GM12878 (cell line): ENCODE measurements at regions of chr5 and their contacts with region 1.

Region 1: DNA sequence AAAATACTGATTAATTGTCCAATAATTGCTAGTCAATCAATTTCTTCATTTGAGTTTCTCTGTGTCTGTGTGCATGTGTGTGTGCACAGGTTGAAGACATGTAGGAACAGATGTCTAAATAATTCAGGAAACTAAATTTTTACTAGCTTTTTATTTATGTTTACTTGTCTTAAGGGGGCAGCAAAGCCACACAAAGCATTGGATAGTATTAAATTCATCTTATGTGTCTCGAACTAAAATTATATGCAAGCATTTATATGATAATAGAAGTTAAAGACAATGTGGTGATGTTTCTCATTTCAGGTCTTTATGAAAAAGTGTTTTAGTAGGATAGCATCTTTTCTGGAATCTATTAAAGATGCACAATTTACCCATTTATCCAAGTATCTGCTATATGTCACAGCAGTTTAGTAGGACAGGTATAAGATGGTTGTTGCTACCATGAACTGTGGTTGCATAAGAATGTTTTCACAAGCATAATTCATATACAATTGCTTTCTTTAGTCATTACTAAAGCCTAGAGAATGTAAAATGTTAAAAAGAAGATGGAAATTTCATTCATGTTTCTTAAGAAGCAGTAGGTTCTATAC is 784.6 kb upstream of the NUDT12 start:
- DNase-seq: no peak
- ATAC-seq: peak; percentile 44; the same call in 1 of the 3 replicates
- H3K4me3 ChIP-seq: no peak overlapping the region
- H3K27ac ChIP-seq: no peak overlapping the region
- H3K4me1 ChIP-seq: no peaks in the 10 kb centered on the region
- H3K27me3 ChIP-seq: no peaks in the 10 kb centered on the region
- CTCF ChIP-seq: peak in 2 of 3 experiments; percentile 8 to 45; a peak in 1 of 6 replicates
- EP300 ChIP-seq: no peak
- POLR2A ChIP-seq: no peak
- RAD21 ChIP-seq: peak; percentile 53

Region 2: DNA sequence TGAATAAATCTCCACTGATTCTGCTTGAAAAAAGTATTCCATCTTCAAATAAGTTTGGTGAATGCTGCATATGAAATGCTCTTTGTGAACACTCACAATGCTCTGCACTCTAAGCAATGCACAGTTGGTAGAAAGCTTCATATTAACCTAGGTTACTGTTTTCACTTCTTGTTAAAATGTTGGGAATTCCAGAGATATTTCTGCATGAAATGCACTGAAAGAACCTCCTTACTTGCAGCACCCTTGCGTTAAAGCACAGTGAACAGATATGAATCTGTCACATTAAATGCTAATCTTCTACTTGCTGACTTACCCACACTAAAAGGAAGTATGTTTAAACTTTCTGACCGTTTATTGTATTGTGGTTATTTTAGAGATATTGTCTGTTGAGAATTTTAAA is 200.6 kb before region 1 on chr5:
- CTCF ChIA-PET with region 1: no interaction called
- POLR2A ChIA-PET with region 1: no interaction called
- RAD21 ChIA-PET with region 1: no interaction called
- SMC1A ChIA-PET with region 1: no interaction called
- in situ Hi-C with region 1: no loop called
- intact Hi-C with region 1: no loop called
- DNase-seq: no peak
- ATAC-seq: no peak
- H3K4me3 ChIP-seq: no peak overlapping the region
- H3K27ac ChIP-seq: no peak overlapping the region
- H3K4me1 ChIP-seq: no peaks in the 10 kb centered on the region
- H3K27me3 ChIP-seq: no peaks in the 10 kb centered on the region
- CTCF ChIP-seq: no peak
- EP300 ChIP-seq: no peak
- POLR2A ChIP-seq: no peak
- RAD21 ChIP-seq: no peak

Region 3: GRCh38 chr5:104412649-104413246 is 65.5 kb after region 1 on chr5:
- CTCF ChIA-PET with region 1: interaction called, 13 read pairs
- POLR2A ChIA-PET with region 1: interaction called, 3 read pairs
- RAD21 ChIA-PET with region 1: interaction called, 19 read pairs
- SMC1A ChIA-PET with region 1: interaction called, 6 read pairs
- in situ Hi-C with region 1: no loop called
- intact Hi-C with region 1: no loop called
- DNase-seq: no peak
- ATAC-seq: peak; percentile 88
- H3K4me3 ChIP-seq: no peak overlapping the region
- H3K27ac ChIP-seq: no peak overlapping the region
- H3K4me1 ChIP-seq: no peaks in the 10 kb centered on the region
- H3K27me3 ChIP-seq: no peaks in the 10 kb centered on the region
- CTCF ChIP-seq: peak in 2 of 3 experiments; percentile 43 to 46; a peak in 3 of 6 replicates
- EP300 ChIP-seq: no peak
- POLR2A ChIP-seq: no peak
- RAD21 ChIP-seq: peak; percentile 41

Region 4: GRCh38 chr5:104513121-104513602 is 165.9 kb after region 1 on chr5:
- CTCF ChIA-PET with region 1: no interaction called
- POLR2A ChIA-PET with region 1: no interaction called
- RAD21 ChIA-PET with region 1: no interaction called
- SMC1A ChIA-PET with region 1: no interaction called
- in situ Hi-C with region 1: no loop called
- intact Hi-C with region 1: no loop called
- DNase-seq: no peak
- ATAC-seq: no peak
- H3K4me3 ChIP-seq: no peak overlapping the region
- H3K27ac ChIP-seq: no peak overlapping the region
- H3K4me1 ChIP-seq: no peaks in the 10 kb centered on the region
- H3K27me3 ChIP-seq: no peaks in the 10 kb centered on the region
- CTCF ChIP-seq: no peak
- EP300 ChIP-seq: no peak
- POLR2A ChIP-seq: no peak
- RAD21 ChIP-seq: no peak

Region 5: DNA sequence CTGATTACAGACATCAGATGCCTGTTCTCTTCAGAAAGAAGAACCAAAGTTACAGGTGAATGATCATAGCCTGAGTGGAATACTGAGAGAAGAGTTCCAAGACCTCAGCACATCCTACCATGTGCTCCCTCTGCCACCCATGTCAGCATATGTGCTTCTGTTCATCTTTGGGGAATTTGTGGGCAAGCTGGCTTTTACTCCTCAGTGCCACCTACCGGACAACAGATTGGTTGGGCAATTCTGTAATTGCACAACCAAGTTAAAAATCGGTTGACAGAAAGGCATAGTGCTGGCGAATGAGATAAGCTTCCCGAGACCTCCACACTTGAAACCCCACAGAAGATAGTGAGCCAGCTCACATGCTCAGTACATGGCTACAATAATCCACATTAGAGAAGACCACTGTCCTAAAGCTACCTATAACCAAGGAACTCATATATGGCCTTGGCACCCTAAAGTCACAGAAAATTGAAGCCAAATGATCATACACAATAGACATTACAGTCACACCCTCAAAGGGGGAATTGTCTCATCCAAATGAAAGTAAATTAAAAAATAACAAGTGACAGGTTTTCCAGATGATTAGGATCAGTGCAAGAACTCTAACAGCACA is 453.3 kb after region 1 on chr5:
- CTCF ChIA-PET with region 1: interaction called, 26 read pairs
- POLR2A ChIA-PET with region 1: no interaction called
- RAD21 ChIA-PET with region 1: interaction called, 5 read pairs
- SMC1A ChIA-PET with region 1: no interaction called
- in situ Hi-C with region 1: no loop called
- intact Hi-C with region 1: loop called (anchors 2 kb)
- DNase-seq: no peak
- ATAC-seq: peak; percentile 81
- H3K4me3 ChIP-seq: no peak overlapping the region
- H3K27ac ChIP-seq: no peak overlapping the region
- H3K4me1 ChIP-seq: no peaks in the 10 kb centered on the region
- H3K27me3 ChIP-seq: no peaks in the 10 kb centered on the region
- CTCF ChIP-seq: peak; percentile 51 to 76 (median 53)
- EP300 ChIP-seq: no peak
- POLR2A ChIP-seq: no peak
- RAD21 ChIP-seq: peak; percentile 37